ENCODE measurements at regions of chr2 and their contacts with region 1.

Region 1: DNA sequence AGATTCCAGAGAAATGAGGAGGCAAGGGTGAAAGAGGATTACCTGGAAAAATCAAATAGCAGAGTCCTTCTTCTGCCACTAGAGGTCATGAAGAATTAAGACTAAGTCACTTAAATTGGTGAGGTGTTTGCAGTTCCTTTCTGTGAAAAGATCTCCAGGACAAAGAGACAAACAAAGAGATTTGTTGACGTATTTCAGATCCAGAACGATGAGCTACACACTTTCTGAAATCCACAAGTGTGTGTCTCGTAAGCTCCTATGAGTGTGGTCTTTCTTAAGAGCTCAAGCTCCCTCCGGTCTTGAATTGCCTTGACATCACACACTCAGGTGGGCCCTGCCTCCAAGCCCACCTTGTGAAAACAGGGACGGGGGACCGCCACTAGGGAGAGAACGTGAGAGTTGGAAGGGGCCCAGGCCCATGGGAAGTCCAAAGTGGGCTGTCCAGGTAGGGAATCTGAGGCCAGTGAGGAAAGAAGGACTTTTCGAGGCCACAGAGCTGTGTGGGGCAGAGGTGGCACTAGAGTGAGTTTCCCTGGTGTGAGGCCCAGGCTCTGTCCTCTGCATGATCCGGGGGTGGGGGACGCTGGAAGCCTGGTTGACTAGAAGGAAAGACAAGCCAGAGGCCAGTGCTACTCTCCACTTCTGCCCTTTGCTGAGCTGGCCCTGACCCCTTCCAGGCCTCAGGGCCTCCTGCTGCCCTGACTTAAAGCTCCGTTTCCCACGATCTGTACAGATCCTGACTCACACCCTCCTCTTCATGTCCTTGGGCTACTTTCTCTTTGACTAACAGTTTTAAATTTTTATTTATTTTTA is 168.1 kb upstream of the NCK2 start:
- DNase-seq: peak in 2 of 4 experiments; percentile 38 to 39
- ATAC-seq: peak; percentile 86
- H3K4me3 ChIP-seq: no peak overlapping the region
- H3K27ac ChIP-seq: no peak overlapping the region
- H3K4me1 ChIP-seq: peaks cover 0 to 5% of the 10 kb centered on the region in 2 experiments; a peak in 1 of 5 replicates
- H3K27me3 ChIP-seq: peaks cover 2 to 9% of the 10 kb centered on the region in 2 experiments; a peak in 4 of 5 replicates
- CTCF ChIP-seq: peak; percentile 52 to 86 (median 60); a peak in 4 of 6 replicates
- EP300 ChIP-seq: no peak
- POLR2A ChIP-seq: no peak
- RAD21 ChIP-seq: peak; percentile 83 to 95

Region 2: DNA sequence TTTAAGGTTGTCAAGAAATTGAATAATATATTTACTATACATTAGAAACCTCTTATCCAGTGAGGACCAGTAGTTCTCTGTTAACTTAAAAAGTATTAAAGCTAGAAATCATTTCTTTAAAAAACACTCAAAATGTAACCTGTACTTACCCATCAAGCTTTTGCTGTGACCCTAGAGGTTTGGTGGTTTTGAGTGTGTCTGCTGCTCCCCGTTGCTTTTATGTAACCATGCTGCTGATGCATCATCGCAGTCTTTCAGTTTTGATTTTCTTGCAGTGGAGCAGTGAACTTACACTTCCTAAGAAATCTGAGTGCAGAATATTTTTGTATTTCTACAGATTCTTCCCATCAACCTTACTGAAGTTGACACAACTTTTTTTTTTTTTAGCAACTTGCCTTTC is 504.6 kb before region 1 on chr2:
- CTCF ChIA-PET with region 1: no interaction called
- POLR2A ChIA-PET with region 1: no interaction called
- in situ Hi-C with region 1: no loop called
- intact Hi-C with region 1: no loop called
- DNase-seq: no peak
- ATAC-seq: no peak
- H3K4me3 ChIP-seq: no peak overlapping the region
- H3K27ac ChIP-seq: no peak overlapping the region
- H3K4me1 ChIP-seq: no peaks in the 10 kb centered on the region
- H3K27me3 ChIP-seq: no peaks in the 10 kb centered on the region
- CTCF ChIP-seq: no peak
- EP300 ChIP-seq: no peak
- POLR2A ChIP-seq: no peak
- RAD21 ChIP-seq: no peak

Region 3: GRCh38 chr2:105617756-105618659 is 41.4 kb after region 1 on chr2:
- CTCF ChIA-PET with region 1: no interaction called
- POLR2A ChIA-PET with region 1: no interaction called
- in situ Hi-C with region 1: no loop called
- intact Hi-C with region 1: no loop called
- DNase-seq: peak in 2 of 4 experiments; percentile 34 to 43
- ATAC-seq: peak; percentile 91
- H3K4me3 ChIP-seq: no peak overlapping the region
- H3K27ac ChIP-seq: no peak overlapping the region
- H3K4me1 ChIP-seq: peaks cover 4 to 9% of the 10 kb centered on the region in 2 experiments; a peak in 3 of 5 replicates
- H3K27me3 ChIP-seq: no peaks in the 10 kb centered on the region; a peak in 1 of 5 replicates
- CTCF ChIP-seq: peak in 1 of 3 experiments; percentile 25; a peak in 1 of 6 replicates
- EP300 ChIP-seq: no peak
- POLR2A ChIP-seq: no peak
- RAD21 ChIP-seq: peak in 1 of 2 experiments; percentile 33; a peak in 2 of 4 replicates

Region 4: GRCh38 chr2:105634198-105634597 is 57.6 kb after region 1 on chr2:
- CTCF ChIA-PET with region 1: no interaction called
- POLR2A ChIA-PET with region 1: no interaction called
- in situ Hi-C with region 1: no loop called
- intact Hi-C with region 1: loop called (anchors 5 kb)
- DNase-seq: peak in 1 of 4 experiments; percentile 18
- ATAC-seq: peak; percentile 86
- H3K4me3 ChIP-seq: no peak overlapping the region
- H3K27ac ChIP-seq: no peak overlapping the region
- H3K4me1 ChIP-seq: no peaks in the 10 kb centered on the region; a peak in 2 of 5 replicates
- H3K27me3 ChIP-seq: no peaks in the 10 kb centered on the region
- CTCF ChIP-seq: peak in 2 of 3 experiments; percentile 25 to 36; a peak in 2 of 6 replicates
- EP300 ChIP-seq: no peak
- POLR2A ChIP-seq: no peak
- RAD21 ChIP-seq: peak in 1 of 2 experiments; percentile 17; a peak in 1 of 4 replicates

Region 5: DNA sequence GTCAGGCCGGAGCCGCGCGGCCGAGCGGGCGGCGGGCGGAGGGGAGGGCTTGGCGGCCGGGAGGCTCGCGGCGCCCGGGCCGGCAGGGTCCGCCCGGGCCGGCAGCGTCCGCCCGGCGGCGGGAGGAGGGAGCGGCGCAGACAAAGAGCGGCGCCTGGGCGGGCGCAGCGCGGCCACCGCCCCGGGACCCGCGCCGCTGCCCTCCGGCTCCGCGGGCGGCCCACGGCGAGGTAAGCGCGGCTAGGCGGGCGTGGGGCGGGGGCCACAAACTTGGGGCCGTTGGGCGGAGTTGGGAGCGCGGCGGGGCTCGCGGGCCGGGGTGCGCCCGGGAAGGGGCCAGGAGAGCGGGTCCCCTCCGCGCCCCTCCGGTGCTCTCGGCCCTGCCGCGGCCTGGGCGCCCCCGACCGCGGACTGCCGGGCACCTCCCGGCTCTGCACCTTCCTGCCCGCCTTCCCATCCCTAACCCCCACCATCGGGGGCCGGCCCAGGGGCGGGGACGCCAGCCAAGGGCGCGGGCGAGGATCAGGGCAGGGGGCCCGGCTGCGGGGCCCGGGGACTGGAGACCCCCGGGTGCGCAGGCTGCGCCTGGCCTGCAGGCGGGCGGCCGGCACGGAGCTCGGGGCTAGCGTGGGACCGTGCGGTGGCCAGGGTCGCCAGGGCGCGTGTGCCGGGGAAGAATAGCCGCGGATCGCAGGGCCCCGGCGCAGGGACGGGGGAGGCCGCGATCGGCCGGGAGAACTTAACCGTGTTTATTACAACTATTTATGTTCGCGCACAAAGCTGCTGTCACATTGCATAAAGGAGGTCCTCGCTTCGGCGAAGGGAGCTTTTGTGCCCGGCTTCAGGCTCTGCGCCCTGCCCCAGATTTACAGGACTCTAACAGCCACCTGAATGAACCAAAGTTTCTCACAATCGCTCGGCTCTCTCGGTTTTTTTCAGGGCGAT is 168.5 kb after region 1 on chr2 and contains the start of gene NCK2:
- CTCF ChIA-PET with region 1: no interaction called
- POLR2A ChIA-PET with region 1: interaction called, 3 read pairs
- in situ Hi-C with region 1: no loop called
- intact Hi-C with region 1: loop called (anchors 5 kb)
- DNase-seq: peak; percentile 24 to 66 (median 48)
- ATAC-seq: peak; percentile 64
- H3K4me3 ChIP-seq: peak within 1 kb of the TSS; percentile 74
- H3K27ac ChIP-seq: peak within 1 kb of the TSS; percentile 68; the same call in 1 of the 3 replicates
- H3K4me1 ChIP-seq: peaks cover 12 to 13% of the 10 kb centered on the region in 2 experiments
- H3K27me3 ChIP-seq: no peaks in the 10 kb centered on the region
- CTCF ChIP-seq: no peak
- EP300 ChIP-seq: no peak
- POLR2A ChIP-seq: no peak
- RAD21 ChIP-seq: no peak
- polyA plus RNA-seq, gene NCK2: 0.90 to 1.8 TPM

Region 6: DNA sequence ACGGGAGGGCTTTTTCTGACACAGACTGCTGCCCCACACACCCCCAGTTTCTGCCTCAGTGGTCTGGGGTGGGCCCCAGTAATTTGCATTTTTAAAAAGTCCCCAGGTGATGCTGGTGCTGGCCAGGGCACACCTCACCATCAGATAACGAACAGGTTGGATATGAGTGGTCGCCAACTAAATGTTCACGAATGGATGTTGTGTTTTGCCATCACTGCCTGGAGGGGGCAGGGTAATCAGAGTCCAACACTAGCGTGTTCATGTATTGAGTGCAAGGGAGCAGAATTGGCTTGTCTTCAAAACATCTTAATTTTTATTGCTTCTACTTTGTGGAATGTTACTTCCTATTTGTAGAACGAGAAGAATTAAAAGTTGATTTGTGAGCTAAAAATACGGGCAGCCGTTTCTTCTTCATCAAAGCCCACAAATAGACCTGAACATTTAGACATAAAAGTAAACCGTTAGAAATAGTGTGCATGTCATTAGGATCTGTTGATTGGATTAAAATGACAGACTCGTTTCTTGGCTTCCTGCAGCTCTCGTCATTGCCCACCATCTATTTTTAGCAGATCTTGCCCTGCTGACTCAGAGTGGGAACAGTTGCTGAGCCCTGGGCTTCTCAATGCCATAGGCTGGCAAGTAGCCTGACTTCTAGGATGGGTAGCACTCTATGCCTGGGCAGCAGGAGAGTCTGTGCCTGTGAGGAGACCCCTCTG is 213.3 kb after region 1 on chr2:
- CTCF ChIA-PET with region 1: interaction called, 3 read pairs
- POLR2A ChIA-PET with region 1: no interaction called
- in situ Hi-C with region 1: no loop called
- intact Hi-C with region 1: loop called (anchors 1 kb)
- DNase-seq: no peak
- ATAC-seq: no peak
- H3K4me3 ChIP-seq: no peak overlapping the region
- H3K27ac ChIP-seq: no peak overlapping the region
- H3K4me1 ChIP-seq: peaks cover 20 to 31% of the 10 kb centered on the region in 2 experiments
- H3K27me3 ChIP-seq: no peaks in the 10 kb centered on the region
- CTCF ChIP-seq: peak; percentile 1 to 39 (median 23); a peak in 3 of 6 replicates
- EP300 ChIP-seq: no peak
- POLR2A ChIP-seq: no peak
- RAD21 ChIP-seq: peak in 1 of 2 experiments; percentile 22; a peak in 2 of 4 replicates

Region 7: DNA sequence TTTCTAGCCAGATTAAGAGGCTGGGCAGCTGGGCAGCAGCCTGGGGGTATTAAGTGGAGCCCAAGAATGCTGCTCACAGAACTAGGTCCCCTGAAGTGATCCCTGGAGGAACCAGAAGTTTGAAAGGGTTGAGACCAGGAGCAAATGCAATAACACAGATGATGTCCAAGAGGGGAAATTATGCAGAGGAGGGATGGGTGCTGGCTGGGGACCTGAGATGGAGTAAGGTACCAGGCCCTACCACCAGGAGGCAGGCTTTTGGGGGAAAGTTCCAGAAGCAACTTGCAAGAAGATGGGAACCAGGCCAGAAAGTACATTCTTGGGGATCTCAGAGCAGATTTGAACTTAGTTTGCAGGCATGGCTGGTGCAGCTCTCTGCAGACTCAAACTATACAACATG is 343.2 kb after region 1 on chr2:
- CTCF ChIA-PET with region 1: no interaction called
- POLR2A ChIA-PET with region 1: no interaction called
- in situ Hi-C with region 1: no loop called
- intact Hi-C with region 1: loop called (anchors 10 kb)
- DNase-seq: peak; percentile 48 to 68 (median 58)
- ATAC-seq: peak; percentile 82
- H3K4me3 ChIP-seq: no peak overlapping the region
- H3K27ac ChIP-seq: no peak overlapping the region
- H3K4me1 ChIP-seq: no peaks in the 10 kb centered on the region; a peak in 1 of 5 replicates
- H3K27me3 ChIP-seq: peaks cover 4 to 32% of the 10 kb centered on the region in 2 experiments
- CTCF ChIP-seq: peak; percentile 62 to 76 (median 64)
- EP300 ChIP-seq: no peak
- POLR2A ChIP-seq: no peak
- RAD21 ChIP-seq: peak; percentile 26 to 62

Region 8: DNA sequence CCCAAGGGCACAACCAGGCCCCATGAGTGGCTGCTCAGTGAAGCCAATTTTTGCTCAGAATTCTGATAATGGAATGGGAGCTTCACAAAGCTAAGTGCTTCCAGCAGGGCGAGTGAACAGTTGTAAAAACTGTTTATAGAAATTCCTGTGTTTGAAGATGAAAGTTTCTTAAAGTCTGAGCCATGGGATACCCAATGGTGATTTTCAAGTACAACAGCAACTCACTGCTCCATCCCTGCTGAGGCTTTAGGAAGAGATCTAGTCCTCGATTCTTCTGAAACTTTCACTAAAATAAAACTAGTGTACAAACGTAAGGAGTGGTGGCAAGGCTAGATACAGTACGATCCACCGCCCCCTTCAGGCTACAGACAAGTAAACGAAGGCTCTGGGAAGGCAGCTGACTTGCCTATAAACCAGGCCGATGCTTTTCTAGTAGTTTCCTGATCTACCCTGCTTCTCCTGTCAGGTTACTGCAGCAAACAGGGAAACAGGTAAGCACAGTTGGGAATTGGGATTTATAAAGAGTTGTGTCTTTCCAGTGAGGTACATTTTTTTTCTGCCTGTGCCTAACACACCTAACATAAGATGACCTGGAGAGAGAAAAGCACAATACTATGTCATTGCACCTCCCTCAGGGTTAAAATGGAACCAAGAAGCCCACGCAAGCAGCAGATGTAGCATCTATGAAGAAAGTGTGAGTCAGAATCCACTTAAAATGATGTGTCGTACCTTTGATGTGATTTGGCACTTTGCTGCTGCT is 508.7 kb after region 1 on chr2:
- CTCF ChIA-PET with region 1: no interaction called
- POLR2A ChIA-PET with region 1: no interaction called
- in situ Hi-C with region 1: no loop called
- intact Hi-C with region 1: loop called (anchors 5 kb)
- DNase-seq: peak in 2 of 4 experiments; percentile 32 to 41
- ATAC-seq: peak; percentile 96
- H3K4me3 ChIP-seq: no peak overlapping the region
- H3K27ac ChIP-seq: no peak overlapping the region
- H3K4me1 ChIP-seq: no peaks in the 10 kb centered on the region
- H3K27me3 ChIP-seq: peaks cover 4 to 8% of the 10 kb centered on the region in 2 experiments; a peak in 3 of 5 replicates
- CTCF ChIP-seq: peak; percentile 54 to 57 (median 55); a peak in 4 of 6 replicates
- EP300 ChIP-seq: no peak
- POLR2A ChIP-seq: no peak
- RAD21 ChIP-seq: peak; percentile 57 to 71

Region 9: DNA sequence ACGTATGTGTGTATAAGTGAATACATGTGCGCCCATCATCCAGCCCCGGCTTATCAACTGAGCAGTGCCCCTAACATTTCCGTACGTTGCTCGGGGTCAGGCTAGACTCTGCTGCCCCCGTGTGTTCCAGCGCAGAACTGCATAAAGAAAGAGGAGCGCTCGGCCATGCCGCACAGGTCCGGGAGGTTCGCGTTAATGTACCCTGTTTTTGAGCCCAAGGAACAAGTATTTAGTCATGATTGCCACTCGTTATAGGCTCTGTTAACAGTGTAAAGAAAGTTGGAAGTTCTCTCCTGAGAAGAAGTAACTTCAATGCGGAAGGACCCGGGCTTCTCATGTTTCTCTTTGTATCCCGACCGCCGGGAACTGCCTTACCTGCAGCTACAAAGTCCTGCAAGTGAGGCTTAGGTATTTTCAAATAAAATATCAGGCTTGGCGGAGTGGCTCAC is 966.2 kb after region 1 on chr2:
- CTCF ChIA-PET with region 1: no interaction called
- POLR2A ChIA-PET with region 1: no interaction called
- in situ Hi-C with region 1: no loop called
- intact Hi-C with region 1: loop called (anchors 10 kb)
- DNase-seq: peak; percentile 76 to 82 (median 81)
- ATAC-seq: peak; percentile 98
- H3K4me3 ChIP-seq: no peak overlapping the region
- H3K27ac ChIP-seq: no peak overlapping the region
- H3K4me1 ChIP-seq: no peaks in the 10 kb centered on the region
- H3K27me3 ChIP-seq: peaks cover 2 to 44% of the 10 kb centered on the region in 2 experiments; a peak in 4 of 5 replicates
- CTCF ChIP-seq: peak; percentile 75 to 84 (median 83)
- EP300 ChIP-seq: no peak
- POLR2A ChIP-seq: no peak
- RAD21 ChIP-seq: peak; percentile 80 to 82